Prostate gland (tissue), 2 donors: ENCODE measurements at regions of chr22 and their contacts with region 1.

Region 1: DNA sequence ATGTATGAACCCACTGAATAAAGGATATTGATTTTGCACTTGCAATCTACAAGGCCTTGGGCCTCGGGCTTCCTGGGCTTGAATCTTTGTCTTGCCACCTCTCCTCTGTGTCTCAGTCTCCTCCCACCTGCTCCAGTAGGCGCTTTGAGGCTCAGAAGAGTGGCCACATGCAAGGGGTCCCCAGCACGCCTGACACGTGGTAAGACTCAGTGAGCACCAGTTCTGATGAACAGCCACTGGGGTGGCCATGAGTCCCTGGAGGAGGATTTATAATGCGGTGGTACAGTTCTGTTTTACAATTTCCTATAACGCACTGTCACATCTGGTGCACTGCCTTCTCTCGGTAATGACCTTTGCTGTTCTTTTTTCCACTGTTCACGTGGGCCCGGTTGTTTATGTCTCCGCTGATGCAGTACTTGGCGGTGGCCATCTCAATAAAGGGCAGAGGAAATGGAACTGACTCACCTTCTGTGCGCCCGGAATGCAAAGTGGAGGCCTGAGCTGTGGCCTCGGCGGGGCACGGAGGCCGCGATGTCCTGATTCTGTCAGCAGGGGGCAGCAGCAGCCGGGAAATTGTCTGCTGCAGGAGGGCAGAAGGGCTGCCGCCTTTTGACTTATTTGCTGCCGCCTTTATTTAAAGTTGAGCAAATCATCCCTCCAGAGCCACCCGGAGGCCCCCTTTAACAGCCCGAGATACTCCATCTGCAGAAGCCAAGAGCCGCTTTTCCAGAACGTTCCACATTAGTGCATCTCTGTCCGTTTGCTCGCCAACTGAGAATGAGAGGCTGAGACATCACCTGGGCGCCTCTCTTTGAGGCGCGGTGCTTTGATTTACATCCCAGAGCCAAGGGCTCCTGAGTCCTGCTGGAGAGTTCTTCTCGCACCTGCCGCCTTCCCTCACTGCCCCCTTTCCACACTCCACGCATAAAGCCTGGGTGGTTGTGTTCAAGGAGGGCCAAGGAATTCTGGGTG is 6.0 kb upstream of the IFT27 start:
- DNase-seq: peak; percentile 69
- H3K4me3 ChIP-seq: no peak overlapping the region
- H3K27ac ChIP-seq: no peak overlapping the region
- H3K4me1 ChIP-seq: no peaks in the 10 kb centered on the region
- H3K27me3 ChIP-seq: no peaks in the 10 kb centered on the region
- CTCF ChIP-seq: peak; percentile 91 to 95 (median 92)
- POLR2A ChIP-seq: no peak

Region 2: GRCh38 chr22:36659762-36660509 is 122.0 kb before region 1 on chr22:
- intact Hi-C with region 1: no loop called
- DNase-seq: peak; percentile 90
- H3K4me3 ChIP-seq: no peak overlapping the region
- H3K27ac ChIP-seq: peak overlapping the region; percentile 49 to 72
- H3K4me1 ChIP-seq: peaks cover 9% of the 10 kb centered on the region
- H3K27me3 ChIP-seq: no peaks in the 10 kb centered on the region
- CTCF ChIP-seq: peak in 1 of 4 experiments; percentile 3
- POLR2A ChIP-seq: no peak

Region 3: GRCh38 chr22:36925388-36926290 is 143.7 kb after region 1 on chr22:
- intact Hi-C with region 1: no loop called
- DNase-seq: no peak
- H3K4me3 ChIP-seq: no peak overlapping the region
- H3K27ac ChIP-seq: no peak overlapping the region
- H3K4me1 ChIP-seq: no peaks in the 10 kb centered on the region
- H3K27me3 ChIP-seq: no peaks in the 10 kb centered on the region
- CTCF ChIP-seq: no peak
- POLR2A ChIP-seq: no peak

Region 4: DNA sequence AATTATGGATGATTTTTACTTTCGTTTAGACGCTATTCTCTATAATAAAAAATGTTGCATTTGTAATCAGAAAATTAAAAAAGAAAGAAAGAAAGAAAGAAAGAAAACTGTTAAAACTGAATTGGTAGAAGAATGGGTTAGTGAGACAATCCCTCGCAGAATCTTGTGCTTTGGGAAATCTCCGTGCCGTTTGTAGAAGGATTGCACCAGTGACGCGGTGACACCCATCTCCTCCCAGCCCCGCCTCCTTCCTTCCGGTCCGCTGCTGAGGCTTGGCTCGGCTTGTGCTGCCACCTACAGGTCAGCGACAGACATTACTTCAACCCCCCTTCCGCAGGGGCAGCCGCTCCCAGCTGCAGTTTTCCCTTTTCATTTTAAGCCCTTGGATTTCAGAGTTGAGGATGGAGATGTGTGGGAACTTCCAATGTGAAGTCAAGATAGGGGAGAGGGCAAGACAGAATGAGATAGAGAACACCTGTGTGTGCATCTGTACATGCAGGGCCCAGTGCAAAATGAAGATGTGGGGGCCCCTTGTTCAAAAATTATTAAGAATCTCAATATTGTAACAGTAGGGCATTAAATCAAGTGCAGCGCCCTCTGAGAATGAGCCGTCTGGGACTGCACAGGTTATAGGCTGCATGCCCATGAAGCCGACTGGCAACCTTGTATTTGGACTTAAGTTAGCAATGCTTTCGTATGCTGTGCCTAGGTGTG is 196.2 kb after region 1 on chr22:
- intact Hi-C with region 1: loop called (anchors 5 kb)
- DNase-seq: peak; percentile 89
- H3K4me3 ChIP-seq: peak overlapping the region in 1 of 2 donors; percentile 25
- H3K27ac ChIP-seq: no peak overlapping the region
- H3K4me1 ChIP-seq: peaks cover 5% of the 10 kb centered on the region
- H3K27me3 ChIP-seq: no peaks in the 10 kb centered on the region
- CTCF ChIP-seq: peak; percentile 84 to 99 (median 97)
- POLR2A ChIP-seq: no peak

Region 5: GRCh38 chr22:37019309-37020125 is 237.6 kb after region 1 on chr22 and contains the starts of genes MPST and TST:
- intact Hi-C with region 1: no loop called
- DNase-seq: peak; percentile 75
- H3K4me3 ChIP-seq: peak within 1 kb of the TSS; percentile 93 to 94
- H3K27ac ChIP-seq: peak within 1 kb of the TSS; percentile 91 to 94
- H3K4me1 ChIP-seq: peaks cover 16% of the 10 kb centered on the region
- H3K27me3 ChIP-seq: no peaks in the 10 kb centered on the region
- CTCF ChIP-seq: peak in 2 of 4 experiments; percentile 12 to 78
- POLR2A ChIP-seq: peak; percentile 69
- total RNA-seq, gene MPST: 136 to 192 TPM
- total RNA-seq, gene TST: 38.1 to 58.1 TPM